ENCODE measurements at regions of chr21 and their contacts with region 1.

Region 1: GRCh38 chr21:28111151-28111619 is 881.5 kb downstream of the LTN1 start:
- DNase-seq: no peak
- H3K4me3 ChIP-seq: no peak overlapping the region
- H3K27ac ChIP-seq: no peak overlapping the region
- H3K4me1 ChIP-seq: no peaks in the 10 kb centered on the region
- H3K27me3 ChIP-seq: no peaks in the 10 kb centered on the region
- CTCF ChIP-seq: no peak

Region 2: GRCh38 chr21:28074676-28075075 is 36.5 kb before region 1 on chr21:
- CTCF ChIA-PET with region 1: no interaction called
- POLR2A ChIA-PET with region 1: no interaction called
- intact Hi-C with region 1: no loop called
- DNase-seq: no peak
- H3K4me3 ChIP-seq: no peak overlapping the region
- H3K27ac ChIP-seq: no peak overlapping the region
- H3K4me1 ChIP-seq: no peaks in the 10 kb centered on the region
- H3K27me3 ChIP-seq: no peaks in the 10 kb centered on the region
- CTCF ChIP-seq: no peak

Region 3: GRCh38 chr21:28459193-28459592 is 348.0 kb after region 1 on chr21:
- CTCF ChIA-PET with region 1: no interaction called
- POLR2A ChIA-PET with region 1: interaction called, 12 read pairs
- intact Hi-C with region 1: no loop called
- DNase-seq: no peak
- H3K4me3 ChIP-seq: no peak overlapping the region
- H3K27ac ChIP-seq: no peak overlapping the region
- H3K4me1 ChIP-seq: no peaks in the 10 kb centered on the region
- H3K27me3 ChIP-seq: no peaks in the 10 kb centered on the region
- CTCF ChIP-seq: no peak

Measured in PC-9 (cell line).